Left colon (tissue), 2 donors: ENCODE measurements at regions of chr11 and their contacts with region 1.

Region 1: GRCh38 chr11:44936525-44936924 is 14.2 kb downstream of the TP53I11 start:
- DNase-seq: peak; percentile 64 to 88
- ATAC-seq: peak; percentile 78

Region 2: DNA sequence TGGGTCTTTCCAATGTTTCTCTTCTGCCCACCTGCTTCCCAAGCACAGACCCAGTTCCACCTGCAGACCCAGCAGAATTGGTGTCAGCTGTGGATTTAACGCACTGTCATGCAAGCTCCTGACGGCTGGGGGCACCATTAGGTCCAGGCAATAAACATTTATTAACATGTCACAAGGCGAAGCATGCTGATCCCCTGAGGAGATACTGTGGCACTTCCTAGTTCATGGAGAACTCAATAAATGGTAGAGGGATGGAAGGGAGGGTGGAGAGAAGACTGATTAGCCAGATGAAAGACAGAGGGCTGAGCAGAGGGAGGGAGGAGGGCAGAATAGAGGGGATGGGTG is 278.0 kb before region 1 on chr11:
- intact Hi-C with region 1: no loop called
- DNase-seq: no peak
- ATAC-seq: no peak

Region 3: GRCh38 chr11:45102810-45103621 is 166.5 kb after region 1 on chr11:
- intact Hi-C with region 1: loop called (anchors 5 kb)
- DNase-seq: peak in 1 of 2 donors; percentile 57
- ATAC-seq: peak; percentile 67

Region 4: GRCh38 chr11:45322891-45323600 is 386.5 kb after region 1 on chr11:
- intact Hi-C with region 1: loop called in 1 of 2 experiments (anchors 10 kb)
- DNase-seq: no peak
- ATAC-seq: no peak